Mucosa of descending colon (tissue), 3 donors: ENCODE measurements at regions of chr6 and their contacts with region 1.

Region 1: DNA sequence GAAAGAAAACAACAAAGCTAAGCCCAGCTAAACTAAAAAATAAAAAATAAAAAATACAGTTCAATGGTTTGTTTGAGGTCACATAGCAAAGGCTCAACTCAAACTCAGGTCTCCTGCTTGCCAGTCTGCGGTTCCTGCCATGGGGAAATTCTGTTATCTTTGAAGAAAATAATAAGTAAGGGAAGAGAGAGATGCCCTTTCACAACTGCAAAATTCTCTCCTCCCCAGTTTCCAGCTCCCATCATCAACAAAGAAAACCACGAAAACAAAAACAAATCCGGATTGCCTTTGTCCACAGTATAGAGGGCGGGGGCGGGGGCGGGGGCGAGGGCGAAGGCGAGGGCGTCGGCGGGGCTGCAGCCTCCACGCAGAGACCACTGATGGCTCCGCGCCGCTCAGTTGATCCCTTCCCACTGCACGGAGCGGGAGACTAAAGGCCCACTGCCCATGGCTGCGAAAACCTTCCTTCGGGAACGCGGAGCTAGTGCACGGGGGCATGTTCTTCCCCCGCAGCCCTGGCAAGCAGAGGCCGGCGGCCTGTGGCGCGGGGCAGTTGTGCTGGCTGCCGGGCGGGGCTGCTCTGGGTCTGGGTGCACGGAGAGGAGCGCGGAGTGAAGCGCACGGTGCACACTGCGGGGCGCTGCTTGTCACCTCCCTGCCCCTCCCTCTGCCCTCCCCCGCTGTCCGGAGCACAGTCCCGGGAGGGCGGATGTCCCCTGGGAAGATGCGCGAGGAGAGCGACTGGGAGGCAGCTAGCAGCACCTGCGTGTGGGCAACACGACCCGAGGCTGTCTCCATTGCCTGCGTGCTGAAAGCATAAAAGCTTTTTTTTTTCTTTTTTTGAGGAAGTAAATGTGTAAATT is 54.1 kb upstream of the TPD52L1 start:
- DNase-seq: peak; percentile 60 to 65 (median 64)
- ATAC-seq: peak; percentile 88
- H3K4me3 ChIP-seq: no peak overlapping the region
- H3K4me1 ChIP-seq: no peaks in the 10 kb centered on the region
- CTCF ChIP-seq: no peak

Region 2: GRCh38 chr6:124961777-124962611 is 137.4 kb before region 1 on chr6 and contains the start of gene RNF217:
- intact Hi-C with region 1: loop called in 1 of 2 experiments (anchors 10 kb)
- DNase-seq: peak; percentile 57 to 73 (median 71)
- ATAC-seq: peak; percentile 61
- H3K4me3 ChIP-seq: peak within 1 kb of the TSS; percentile 50
- H3K4me1 ChIP-seq: peaks cover 9% of the 10 kb centered on the region
- CTCF ChIP-seq: no peak
- total RNA-seq, gene RNF217: 11.6 to 47.3 (median 15.0) TPM